GM18951 (cell line): ENCODE measurements at regions of chr20 and their contacts with region 1.

Region 1: GRCh38 chr20:32534661-32535240 is 50.4 kb downstream of the NOL4L start:
- POLR2A ChIP-seq: no peak

Region 2: DNA sequence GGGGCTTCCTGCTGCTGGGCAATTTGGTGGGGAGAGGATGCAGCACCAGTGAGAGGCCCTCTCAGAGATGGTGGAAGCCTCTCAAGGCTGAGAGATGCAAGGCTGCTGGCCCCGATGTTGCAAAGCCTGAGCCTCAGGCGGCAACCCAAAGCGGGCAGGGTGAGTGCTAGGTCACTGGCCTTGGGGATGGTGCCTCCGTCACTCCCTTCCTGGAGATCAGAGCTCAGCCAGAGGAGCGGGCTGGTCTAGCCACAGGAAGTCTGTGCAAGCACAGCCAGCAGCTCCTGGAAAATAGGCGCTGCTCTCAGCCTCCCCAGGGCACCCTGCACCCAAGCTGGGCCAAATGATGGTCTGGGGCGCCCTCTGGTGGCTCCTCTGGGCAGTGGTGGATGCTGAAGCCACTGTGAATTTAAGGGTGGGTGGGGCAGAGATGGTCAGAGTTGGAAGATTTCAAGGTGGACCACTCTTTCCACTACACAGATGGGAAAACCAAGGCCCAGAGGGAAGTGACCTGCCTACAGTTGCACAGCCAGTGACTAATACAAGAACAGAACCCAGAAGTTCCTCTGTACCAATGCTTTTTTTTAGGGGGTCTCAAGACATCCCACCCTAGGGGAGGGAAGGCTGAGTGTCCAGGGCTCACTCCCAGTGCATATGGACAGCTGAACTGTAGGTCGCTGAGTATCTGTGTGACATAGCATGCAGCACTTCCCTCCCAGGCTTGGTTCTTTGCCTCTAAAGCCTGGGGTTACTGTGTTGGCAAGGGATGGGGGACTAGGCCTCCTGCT is 118.2 kb after region 1 on chr20:
- in situ Hi-C with region 1: loop called (anchors 5 kb)
- POLR2A ChIP-seq: no peak